Mammary epithelial cell (primary cell): ENCODE measurements at regions of chrX and their contacts with region 1.

Region 1: DNA sequence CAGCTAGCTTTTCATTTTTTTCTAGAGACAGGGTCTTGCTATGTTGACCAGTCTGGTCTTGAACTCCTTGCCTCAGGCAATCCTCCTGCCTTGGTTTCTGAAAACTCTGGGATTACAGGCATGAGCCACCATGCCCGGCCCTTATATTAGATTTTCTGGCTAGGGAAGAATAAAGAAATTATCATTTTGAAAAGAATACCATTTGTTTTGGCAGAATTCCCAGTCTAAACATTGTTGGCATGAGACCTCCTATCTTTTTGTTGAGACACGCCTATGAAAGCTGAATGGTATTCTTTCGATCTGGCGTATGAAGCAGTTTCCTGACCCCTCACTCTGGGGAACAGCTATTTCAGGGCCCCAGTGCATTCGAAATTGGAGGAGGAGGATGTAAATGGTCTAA is 107.0 kb downstream of the REPS2 start:
- DNase-seq: peak; percentile 24
- H3K4me3 ChIP-seq: no peak overlapping the region
- H3K27ac ChIP-seq: no peak overlapping the region
- H3K4me1 ChIP-seq: peaks cover 18% of the 10 kb centered on the region
- H3K27me3 ChIP-seq: peaks cover 2% of the 10 kb centered on the region
- CTCF ChIP-seq: no peak

Region 2: DNA sequence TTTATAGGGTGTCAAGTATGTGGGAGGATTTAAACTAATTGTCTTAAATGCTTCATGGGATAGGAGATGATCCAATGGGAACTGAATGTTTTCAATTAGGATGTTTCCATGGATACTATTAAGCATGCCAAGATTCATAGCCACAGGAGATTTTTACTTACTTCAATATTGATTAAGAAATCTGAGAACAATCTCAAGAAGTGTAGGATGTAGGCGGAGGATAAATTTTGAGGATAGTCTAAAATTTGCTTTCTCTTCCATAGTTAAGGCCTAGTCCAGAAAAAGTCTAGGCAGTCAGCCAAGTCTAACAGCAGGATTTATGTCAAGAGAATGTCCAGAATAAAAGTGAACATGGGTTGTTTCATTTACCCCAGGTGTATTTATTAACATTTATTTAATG is 74.3 kb before region 1 on chrX:
- CTCF ChIA-PET with region 1: no interaction called
- dilution Hi-C with region 1: no loop called
- in situ Hi-C with region 1: no loop called
- intact Hi-C with region 1: no loop called
- DNase-seq: no peak
- H3K4me3 ChIP-seq: no peak overlapping the region
- H3K27ac ChIP-seq: no peak overlapping the region
- H3K4me1 ChIP-seq: no peaks in the 10 kb centered on the region
- H3K27me3 ChIP-seq: peaks cover 2% of the 10 kb centered on the region
- CTCF ChIP-seq: no peak

Region 3: DNA sequence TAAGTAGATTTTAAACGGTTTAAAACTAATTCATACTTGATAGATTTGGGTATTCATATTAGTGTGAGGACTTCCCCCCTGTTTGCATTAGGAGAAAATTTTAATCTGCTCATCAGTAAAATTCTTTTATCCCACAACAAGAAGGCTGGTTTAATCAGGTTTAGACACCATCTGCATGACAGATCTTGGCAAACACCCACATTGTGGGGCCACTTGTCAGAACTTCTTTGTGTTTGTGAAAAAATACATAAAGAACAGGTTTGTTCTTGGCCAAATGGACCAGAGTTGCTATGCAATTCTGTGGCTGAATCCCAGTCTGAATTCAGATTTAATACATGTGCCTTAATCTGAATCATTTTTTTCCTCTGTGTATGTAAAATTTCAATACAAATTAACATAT is 14.0 kb after region 1 on chrX:
- CTCF ChIA-PET with region 1: no interaction called
- dilution Hi-C with region 1: no loop called
- in situ Hi-C with region 1: no loop called
- intact Hi-C with region 1: loop called (anchors 2 kb)
- DNase-seq: peak; percentile 64
- H3K4me3 ChIP-seq: no peak overlapping the region
- H3K27ac ChIP-seq: no peak overlapping the region
- H3K4me1 ChIP-seq: peaks cover 13% of the 10 kb centered on the region
- H3K27me3 ChIP-seq: no peaks in the 10 kb centered on the region
- CTCF ChIP-seq: no peak